Activated naive CD4-positive, alpha-beta T cell treated with anti-CD3 and anti-CD28 coated beads for 36 hours (primary cell): ENCODE measurements at regions of chr20 and their contacts with region 1.

Region 1: DNA sequence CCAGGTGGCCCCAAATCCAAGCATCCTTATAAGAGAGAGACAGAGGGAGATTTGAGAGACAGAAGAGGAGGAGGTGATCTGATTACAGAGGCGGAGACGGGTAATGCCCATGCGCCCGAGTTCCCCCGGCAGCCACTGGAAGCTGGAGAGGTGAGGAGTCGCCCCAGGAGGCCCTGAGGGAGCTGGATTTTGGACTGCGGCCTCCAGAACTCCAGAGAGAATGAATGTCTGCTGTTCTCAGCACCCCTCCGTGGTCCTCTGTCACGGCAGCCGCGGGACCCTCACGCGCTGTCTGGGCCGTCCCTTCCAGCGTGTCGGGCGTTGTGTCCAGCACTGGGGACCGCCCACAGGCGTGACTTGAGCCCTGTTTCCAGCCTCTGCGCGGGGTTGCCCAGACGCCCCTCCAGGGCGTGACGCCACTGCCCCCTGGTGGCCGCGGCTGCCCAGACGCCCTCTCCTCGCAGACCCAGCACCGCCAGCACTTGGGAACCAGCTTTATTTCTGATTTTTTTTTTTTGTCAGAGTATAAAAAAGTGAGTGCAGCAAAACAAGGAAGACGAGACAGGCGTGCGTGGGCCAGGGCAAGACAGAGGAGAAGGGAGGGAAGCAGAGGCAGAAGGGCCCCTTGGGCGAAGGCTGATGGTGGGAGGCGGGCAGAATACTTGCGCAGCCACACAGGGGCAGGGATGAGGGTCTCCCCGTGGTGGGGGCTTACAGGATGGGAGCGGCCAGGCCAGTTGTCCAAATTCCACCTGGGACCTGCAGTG is 4.1 kb upstream of the ZNF512B start:
- DNase-seq: peak; percentile 79
- H3K4me3 Mint-ChIP-seq: no peak overlapping the region
- H3K27ac Mint-ChIP-seq: peak overlapping the region; percentile 15
- H3K4me1 Mint-ChIP-seq: peaks cover 41% of the 10 kb centered on the region
- H3K27me3 Mint-ChIP-seq: no peaks in the 10 kb centered on the region

Region 2: GRCh38 chr20:63782051-63782471 is 191.8 kb before region 1 on chr20:
- CTCF ChIA-PET with region 1: no interaction called
- intact Hi-C with region 1: loop called (anchors 1 kb)
- DNase-seq: peak; percentile 65
- H3K4me3 Mint-ChIP-seq: no peak overlapping the region
- H3K27ac Mint-ChIP-seq: no peak overlapping the region
- H3K4me1 Mint-ChIP-seq: peaks cover 11% of the 10 kb centered on the region
- H3K27me3 Mint-ChIP-seq: no peaks in the 10 kb centered on the region

Region 3: GRCh38 chr20:63911176-63911575 is 62.6 kb before region 1 on chr20:
- CTCF ChIA-PET with region 1: interaction called, 10 read pairs
- intact Hi-C with region 1: loop called (anchors 1 kb)
- DNase-seq: no peak
- H3K4me3 Mint-ChIP-seq: no peak overlapping the region
- H3K27ac Mint-ChIP-seq: no peak overlapping the region
- H3K4me1 Mint-ChIP-seq: peaks cover 39% of the 10 kb centered on the region
- H3K27me3 Mint-ChIP-seq: no peaks in the 10 kb centered on the region